Colonic mucosa (tissue), 4 donors: ENCODE measurements at regions of chr11 and their contacts with region 1.

Region 1: GRCh38 chr11:3217676-3218482 is 734 bp downstream of the MRGPRG start:
- DNase-seq: no peak
- H3K4me3 ChIP-seq: no peak overlapping the region
- H3K27ac ChIP-seq: no peak overlapping the region
- H3K4me1 ChIP-seq: no peaks in the 10 kb centered on the region
- H3K27me3 ChIP-seq: peaks cover 9% of the 10 kb centered on the region
- CTCF ChIP-seq: no peak

Region 2: DNA sequence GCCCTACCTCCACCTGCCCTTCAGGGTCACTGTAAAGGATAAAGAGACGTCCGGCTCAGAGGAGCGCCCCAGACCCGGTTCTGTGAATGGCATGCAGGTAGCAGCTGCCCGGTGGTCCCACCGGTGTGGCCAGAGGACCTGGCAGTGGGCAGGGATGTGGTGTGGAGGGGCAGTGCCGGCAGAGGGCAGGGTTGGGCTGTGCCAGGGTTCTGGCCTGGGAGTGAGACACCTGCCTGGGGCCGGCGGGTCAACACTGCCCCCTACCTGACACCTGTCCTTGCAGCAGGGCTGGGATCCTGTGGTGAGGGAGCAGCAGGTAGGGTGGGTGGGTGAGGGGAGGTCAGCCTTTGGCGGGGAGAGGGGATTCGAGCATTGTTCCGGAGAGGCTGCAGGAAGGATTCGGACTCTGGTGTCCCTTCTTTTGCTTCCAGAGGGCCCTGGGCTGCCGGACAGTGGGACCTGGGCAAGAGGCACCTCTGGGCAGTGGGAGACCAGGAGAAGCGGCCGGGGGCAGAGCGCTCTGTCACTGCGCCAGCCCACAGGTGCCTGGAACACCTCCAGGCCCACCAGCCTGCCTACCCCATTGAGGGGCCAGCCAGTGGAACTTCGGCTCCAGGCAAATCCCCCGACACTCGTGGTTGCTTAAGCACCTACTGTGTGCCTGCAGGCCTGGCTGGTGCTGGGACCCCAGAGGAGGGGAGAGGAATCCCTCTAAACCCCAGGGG is 287.0 kb before region 1 on chr11:
- intact Hi-C with region 1: no loop called
- DNase-seq: peak; percentile 95
- H3K4me3 ChIP-seq: peak overlapping the region; percentile 81
- H3K27ac ChIP-seq: peak overlapping the region; percentile 88
- H3K4me1 ChIP-seq: peaks cover 5% of the 10 kb centered on the region
- H3K27me3 ChIP-seq: no peaks in the 10 kb centered on the region
- CTCF ChIP-seq: peak; percentile 85

Region 3: DNA sequence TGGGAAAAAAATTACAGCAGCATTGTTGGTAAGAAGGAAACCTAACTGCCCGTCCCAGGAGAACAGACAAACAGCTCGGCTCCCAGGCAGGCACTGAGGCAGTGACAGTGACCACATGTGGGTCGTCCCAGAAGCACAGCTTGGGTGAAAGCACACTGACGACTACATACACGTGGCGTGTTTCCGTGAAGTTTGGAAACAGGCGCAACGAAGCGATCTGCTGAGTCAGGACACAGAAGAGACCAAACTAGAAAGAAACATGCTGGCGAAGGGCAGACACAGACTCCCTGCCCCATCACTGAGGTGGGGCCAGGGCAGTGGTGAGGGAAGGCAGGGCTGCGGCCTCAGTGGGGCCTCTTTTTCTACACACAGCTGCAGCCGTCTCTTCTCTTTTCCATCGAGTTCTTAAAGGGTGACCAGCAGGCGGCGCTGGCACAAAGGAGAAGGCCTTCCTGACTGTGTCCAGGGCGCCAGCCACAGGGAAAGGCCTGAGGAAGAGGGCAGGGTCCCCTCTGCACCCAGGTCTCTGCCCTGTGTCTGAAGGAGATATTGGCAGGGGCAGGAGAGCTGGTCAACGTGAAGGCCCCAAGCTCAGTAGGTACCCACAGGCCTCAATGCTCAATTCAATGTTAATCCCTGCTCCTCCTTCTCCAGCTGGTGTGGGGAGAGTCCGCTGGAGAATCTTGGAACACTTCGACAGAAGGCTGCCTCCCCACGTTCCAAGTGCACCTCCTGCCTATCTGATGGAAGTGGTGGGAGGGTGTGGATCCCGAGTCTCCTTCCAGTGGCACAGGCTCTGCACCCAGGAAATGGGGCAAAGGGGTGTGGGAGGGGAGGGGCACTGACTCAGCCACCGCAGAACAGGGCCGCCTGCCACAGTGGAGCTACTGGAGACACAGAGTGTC is 180.6 kb before region 1 on chr11:
- intact Hi-C with region 1: loop called (anchors 2 kb)
- DNase-seq: peak; percentile 85
- H3K4me3 ChIP-seq: no peak overlapping the region
- H3K27ac ChIP-seq: no peak overlapping the region
- H3K4me1 ChIP-seq: no peaks in the 10 kb centered on the region
- H3K27me3 ChIP-seq: no peaks in the 10 kb centered on the region
- CTCF ChIP-seq: peak; percentile 58

Region 4: DNA sequence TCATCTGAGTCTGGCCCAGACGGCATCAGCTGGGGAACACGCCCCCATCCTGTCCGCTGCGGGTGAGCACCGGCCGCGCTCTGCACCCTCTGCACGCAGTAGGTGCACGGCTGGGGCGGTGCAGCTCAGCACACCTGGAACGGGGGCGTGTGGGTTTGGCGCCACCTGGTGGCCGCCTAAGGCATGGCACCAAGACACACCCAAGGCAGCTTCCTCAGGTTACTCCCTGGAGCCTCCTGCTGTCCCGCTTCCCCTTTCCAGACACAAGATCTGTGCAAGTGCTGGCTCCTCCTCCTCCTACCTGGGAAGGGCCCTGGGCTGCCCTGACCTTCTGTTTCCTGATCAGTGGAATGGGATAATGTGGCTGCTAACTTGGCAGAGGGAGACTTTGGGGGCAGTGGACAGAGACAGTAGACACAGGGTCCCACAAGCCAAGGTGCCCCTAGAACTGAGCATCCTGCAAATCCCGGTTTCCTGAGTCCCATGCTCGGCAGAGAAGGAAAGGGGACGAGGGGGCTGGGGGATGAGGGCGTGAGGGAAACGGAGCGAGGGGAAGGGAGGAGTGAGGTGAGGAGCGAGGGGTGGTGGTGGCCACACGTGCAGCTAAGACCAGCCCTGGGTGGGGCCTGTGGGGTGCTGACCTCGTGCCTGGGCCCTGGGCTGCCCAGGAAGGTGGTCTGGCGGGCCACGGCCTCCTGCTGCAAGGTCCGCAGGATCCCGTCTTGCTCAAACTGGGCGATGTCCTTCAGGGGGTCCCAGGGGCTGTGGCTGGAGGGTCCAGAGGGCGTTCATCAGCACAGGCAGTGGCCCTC is 125.9 kb before region 1 on chr11:
- intact Hi-C with region 1: loop called (anchors 5 kb)
- DNase-seq: peak; percentile 86
- H3K4me3 ChIP-seq: no peak overlapping the region
- H3K27ac ChIP-seq: no peak overlapping the region
- H3K4me1 ChIP-seq: peaks cover 6% of the 10 kb centered on the region
- H3K27me3 ChIP-seq: no peaks in the 10 kb centered on the region
- CTCF ChIP-seq: peak; percentile 99

Region 5: GRCh38 chr11:3109921-3110706 is 107.8 kb before region 1 on chr11:
- intact Hi-C with region 1: loop called (anchors 5 kb)
- DNase-seq: no peak
- H3K4me3 ChIP-seq: no peak overlapping the region
- H3K27ac ChIP-seq: no peak overlapping the region
- H3K4me1 ChIP-seq: no peaks in the 10 kb centered on the region
- H3K27me3 ChIP-seq: no peaks in the 10 kb centered on the region
- CTCF ChIP-seq: peak; percentile 71